Activated CD4-positive, alpha-beta memory T cell treated with anti-CD3 and anti-CD28 coated beads, Interleukin-2, amount 10 ng/mL, durations not matched to agents 7 days and 5 days (primary cell): ENCODE measurements at regions of chr1 and their contacts with region 1.

Region 1: DNA sequence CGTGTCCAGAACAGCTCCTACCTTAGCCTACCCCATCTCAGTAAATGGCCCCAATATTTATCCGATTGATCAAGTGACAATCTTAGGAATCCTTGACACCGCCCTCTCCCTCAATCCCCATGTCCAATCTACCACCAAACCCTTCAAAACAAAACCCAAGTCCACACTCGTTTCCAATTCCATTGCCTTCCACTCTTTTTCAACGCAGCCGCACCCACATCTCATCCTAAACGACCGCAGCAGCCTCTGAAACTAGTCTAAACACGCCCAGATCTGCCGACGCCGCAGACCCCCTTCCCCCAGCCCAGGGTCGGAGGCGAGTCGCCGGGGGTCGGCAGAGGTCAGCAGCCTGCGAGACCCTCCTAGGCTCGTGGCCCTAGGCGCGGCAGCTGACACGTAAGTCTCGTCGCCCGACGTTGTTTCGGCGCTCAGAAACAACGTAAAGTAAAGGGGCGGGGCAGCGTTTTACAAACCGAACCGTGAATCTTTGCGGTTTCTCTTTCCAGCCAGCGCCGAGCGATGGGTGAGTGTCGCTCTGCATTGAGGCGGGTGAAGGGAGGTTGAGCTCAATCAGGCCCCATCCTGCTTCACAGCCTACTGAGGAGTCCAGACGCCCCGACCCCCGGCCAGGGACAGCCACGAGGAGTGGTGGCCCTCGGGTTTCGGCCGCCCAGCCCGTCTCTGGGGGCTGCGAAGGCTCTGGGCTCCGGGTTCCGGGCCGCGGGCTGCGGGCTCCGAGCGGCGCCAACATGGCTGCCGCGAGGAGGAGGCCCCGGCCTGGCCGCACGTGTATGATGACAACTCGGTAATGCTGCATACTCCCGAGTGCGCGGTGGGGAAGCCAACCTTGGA is at the start of gene RPS8:
- DNase-seq: peak; percentile 93
- H3K4me3 Mint-ChIP-seq: peak within 1 kb of the TSS; percentile 90
- H3K27ac Mint-ChIP-seq: peak within 1 kb of the TSS; percentile 90
- H3K4me1 Mint-ChIP-seq: peaks cover 35% of the 10 kb centered on the region
- H3K27me3 Mint-ChIP-seq: no peaks in the 10 kb centered on the region
- total RNA-seq, gene RPS8: 1,610 to 1,658 TPM

Region 2: DNA sequence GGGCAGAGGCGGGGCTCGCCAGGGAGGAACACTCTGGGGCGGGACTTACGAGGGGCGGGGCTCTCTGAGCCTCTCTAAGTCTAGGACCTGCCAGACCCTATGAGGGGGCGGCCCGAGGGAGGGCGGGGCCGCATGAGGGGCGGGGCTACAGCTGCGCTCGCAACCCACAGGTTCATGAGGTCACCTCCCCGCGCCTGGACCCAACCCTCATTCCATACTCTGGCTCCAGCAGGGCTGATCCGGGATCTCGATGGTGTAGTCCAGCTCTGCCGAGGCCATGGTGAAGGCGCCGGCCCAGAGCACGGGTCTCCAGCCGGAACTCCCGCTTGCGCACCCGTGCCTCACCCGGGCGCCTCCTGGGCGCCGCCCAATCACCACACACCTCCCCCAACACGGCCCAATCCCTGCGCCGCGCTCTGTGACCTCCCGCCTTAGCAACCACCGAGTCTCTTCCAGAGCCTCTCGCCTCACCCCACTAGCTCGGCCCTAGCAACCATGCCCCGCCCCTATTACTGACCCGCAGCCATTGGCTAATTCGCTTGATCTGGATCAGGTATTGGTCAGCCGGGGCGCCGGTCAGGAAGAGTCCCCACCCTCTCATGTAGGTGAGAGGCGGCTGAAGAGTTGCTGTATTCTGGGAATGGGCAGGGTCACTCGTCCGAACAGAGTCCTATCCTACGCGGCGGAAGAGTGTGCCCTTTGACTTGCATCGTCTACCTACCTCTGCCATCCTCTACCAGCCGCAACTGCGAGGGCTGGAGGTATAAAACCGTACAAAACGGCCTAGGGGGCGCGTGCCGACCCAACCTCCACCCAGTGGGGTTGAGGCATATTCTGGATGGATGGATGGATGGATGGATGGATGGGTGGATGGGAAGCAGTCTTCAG is 100.9 kb before region 1 on chr1 and contains the starts of genes ARMH1 and TMEM53:
- CTCF ChIA-PET with region 1: no interaction called
- POLR2A ChIA-PET with region 1: no interaction called
- DNase-seq: peak; percentile 99
- H3K4me3 Mint-ChIP-seq: peak within 1 kb of the TSS; percentile 83
- H3K27ac Mint-ChIP-seq: peak within 1 kb of the TSS; percentile 79
- H3K4me1 Mint-ChIP-seq: peaks cover 32% of the 10 kb centered on the region
- H3K27me3 Mint-ChIP-seq: no peaks in the 10 kb centered on the region
- total RNA-seq, gene ARMH1: 20.8 to 21.2 TPM
- total RNA-seq, gene TMEM53: 4.3 to 5.6 TPM

Region 3: GRCh38 chr1:44747878-44748277 is 27.4 kb before region 1 on chr1:
- CTCF ChIA-PET with region 1: no interaction called
- POLR2A ChIA-PET with region 1: interaction called, 28 read pairs
- DNase-seq: no peak
- H3K4me3 Mint-ChIP-seq: no peak overlapping the region
- H3K27ac Mint-ChIP-seq: peak overlapping the region; percentile 40
- H3K4me1 Mint-ChIP-seq: peaks cover 36% of the 10 kb centered on the region
- H3K27me3 Mint-ChIP-seq: no peaks in the 10 kb centered on the region

Region 4: DNA sequence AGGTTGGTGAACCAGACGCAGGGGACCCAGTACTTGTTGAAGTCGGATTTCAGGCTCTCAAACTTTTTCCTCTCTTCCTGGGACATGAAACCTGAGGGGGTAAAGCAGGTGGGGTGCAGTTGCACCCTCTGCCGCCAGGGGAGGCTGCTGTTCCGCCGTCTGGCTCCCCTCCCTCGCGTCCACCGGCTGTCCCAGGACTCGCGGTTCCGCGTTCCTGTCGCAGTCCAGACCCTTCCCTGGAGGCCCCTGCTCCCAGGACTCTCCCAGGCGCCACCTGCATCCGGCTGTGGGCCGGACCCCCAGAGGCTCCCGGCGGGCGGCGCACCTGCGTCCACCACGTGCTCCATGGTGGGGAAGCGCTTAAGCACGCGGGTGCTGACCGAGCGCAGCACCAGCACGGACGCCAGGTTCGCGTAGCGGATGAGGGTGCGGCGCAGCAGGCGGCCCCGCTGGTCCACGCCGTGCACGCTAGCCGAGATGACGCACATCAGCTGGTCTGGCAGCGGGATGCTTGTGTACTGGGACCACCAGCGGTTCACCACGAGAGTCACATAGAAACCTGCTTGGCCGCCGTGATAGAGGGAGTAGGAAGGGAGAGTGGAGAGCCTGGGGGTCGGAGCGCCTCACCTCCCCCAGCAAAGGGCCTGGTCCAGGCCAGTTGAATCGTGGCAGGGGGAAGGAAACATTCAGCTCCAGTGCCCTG is 11.0 kb after region 1 on chr1:
- CTCF ChIA-PET with region 1: interaction called, 17 read pairs
- POLR2A ChIA-PET with region 1: interaction called, 109 read pairs
- DNase-seq: peak; percentile 78
- H3K4me3 Mint-ChIP-seq: peak overlapping the region; percentile 59
- H3K27ac Mint-ChIP-seq: no peak overlapping the region
- H3K4me1 Mint-ChIP-seq: peaks cover 36% of the 10 kb centered on the region
- H3K27me3 Mint-ChIP-seq: no peaks in the 10 kb centered on the region

Region 5: GRCh38 chr1:44799770-44800584 is 24.7 kb after region 1 on chr1 and contains the start of gene PLK3:
- CTCF ChIA-PET with region 1: interaction called, 7 read pairs
- POLR2A ChIA-PET with region 1: interaction called, 87 read pairs
- DNase-seq: peak; percentile 98
- H3K4me3 Mint-ChIP-seq: peak within 1 kb of the TSS; percentile 90
- H3K27ac Mint-ChIP-seq: peak within 1 kb of the TSS; percentile 98
- H3K4me1 Mint-ChIP-seq: peaks cover 47% of the 10 kb centered on the region
- H3K27me3 Mint-ChIP-seq: no peaks in the 10 kb centered on the region
- total RNA-seq, gene PLK3: 62.8 to 63.5 TPM

Region 6: GRCh38 chr1:44812822-44813543 is 37.7 kb after region 1 on chr1:
- CTCF ChIA-PET with region 1: interaction called, 7 read pairs
- POLR2A ChIA-PET with region 1: interaction called, 195 read pairs
- DNase-seq: no peak
- H3K4me3 Mint-ChIP-seq: peak overlapping the region; percentile 83
- H3K27ac Mint-ChIP-seq: peak overlapping the region; percentile 98
- H3K4me1 Mint-ChIP-seq: peaks cover 70% of the 10 kb centered on the region
- H3K27me3 Mint-ChIP-seq: no peaks in the 10 kb centered on the region

Region 7: GRCh38 chr1:44985747-44986359 is 210.5 kb after region 1 on chr1:
- CTCF ChIA-PET with region 1: interaction called, 3 read pairs
- POLR2A ChIA-PET with region 1: interaction called, 11 read pairs
- DNase-seq: no peak
- H3K4me3 Mint-ChIP-seq: peak overlapping the region; percentile 90
- H3K27ac Mint-ChIP-seq: peak overlapping the region; percentile 86
- H3K4me1 Mint-ChIP-seq: peaks cover 28% of the 10 kb centered on the region
- H3K27me3 Mint-ChIP-seq: peaks cover 2% of the 10 kb centered on the region